Posterior cingulate gyrus (tissue), 11 donors: ENCODE measurements at regions of chr17 and their contacts with region 1.

Region 1: GRCh38 chr17:82551779-82552457 is 32.4 kb downstream of the FOXK2 start:
- DNase-seq: peak; percentile 26 to 94 (median 56)

Region 2: DNA sequence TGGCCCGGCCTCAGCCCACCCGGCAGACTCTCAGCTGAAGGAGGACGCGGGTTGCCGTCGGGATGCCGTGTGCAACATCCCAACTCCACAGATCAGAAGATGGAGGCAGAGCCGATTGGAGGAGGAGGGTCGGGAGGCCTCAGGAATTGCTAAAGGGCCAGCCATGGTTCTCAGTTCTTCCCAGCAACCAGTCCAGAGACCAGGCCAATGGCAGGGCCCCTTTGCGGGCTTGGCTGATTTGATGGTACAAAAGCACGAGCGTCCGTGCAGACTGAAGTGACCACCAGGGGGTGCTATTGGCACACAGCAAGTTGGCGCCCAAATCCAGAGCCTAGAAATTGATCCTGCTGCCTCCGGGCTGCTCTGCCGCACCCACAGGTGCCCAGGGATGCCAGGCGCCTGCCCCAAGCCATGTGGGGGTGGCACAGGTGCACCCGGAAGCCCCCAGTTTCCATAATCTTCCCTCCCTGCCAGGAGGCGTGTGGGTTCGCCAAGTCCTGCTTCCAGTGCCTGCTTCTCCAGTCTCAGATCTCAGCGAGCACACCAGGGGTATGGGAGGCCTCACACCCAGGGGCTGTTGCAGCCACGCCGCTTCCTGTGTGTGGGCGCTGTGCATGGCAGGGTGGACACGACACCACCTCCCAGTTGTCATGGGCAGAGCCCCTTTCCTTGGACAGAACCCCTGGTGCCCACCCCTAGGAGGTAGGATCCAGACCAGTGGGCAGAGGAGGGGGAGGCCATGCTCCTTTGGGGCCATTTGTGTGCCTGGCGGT is 200.0 kb before region 1 on chr17:
- intact Hi-C with region 1: loop called (anchors 10 kb)
- DNase-seq: peak; percentile 63 to 96 (median 86)

Region 3: DNA sequence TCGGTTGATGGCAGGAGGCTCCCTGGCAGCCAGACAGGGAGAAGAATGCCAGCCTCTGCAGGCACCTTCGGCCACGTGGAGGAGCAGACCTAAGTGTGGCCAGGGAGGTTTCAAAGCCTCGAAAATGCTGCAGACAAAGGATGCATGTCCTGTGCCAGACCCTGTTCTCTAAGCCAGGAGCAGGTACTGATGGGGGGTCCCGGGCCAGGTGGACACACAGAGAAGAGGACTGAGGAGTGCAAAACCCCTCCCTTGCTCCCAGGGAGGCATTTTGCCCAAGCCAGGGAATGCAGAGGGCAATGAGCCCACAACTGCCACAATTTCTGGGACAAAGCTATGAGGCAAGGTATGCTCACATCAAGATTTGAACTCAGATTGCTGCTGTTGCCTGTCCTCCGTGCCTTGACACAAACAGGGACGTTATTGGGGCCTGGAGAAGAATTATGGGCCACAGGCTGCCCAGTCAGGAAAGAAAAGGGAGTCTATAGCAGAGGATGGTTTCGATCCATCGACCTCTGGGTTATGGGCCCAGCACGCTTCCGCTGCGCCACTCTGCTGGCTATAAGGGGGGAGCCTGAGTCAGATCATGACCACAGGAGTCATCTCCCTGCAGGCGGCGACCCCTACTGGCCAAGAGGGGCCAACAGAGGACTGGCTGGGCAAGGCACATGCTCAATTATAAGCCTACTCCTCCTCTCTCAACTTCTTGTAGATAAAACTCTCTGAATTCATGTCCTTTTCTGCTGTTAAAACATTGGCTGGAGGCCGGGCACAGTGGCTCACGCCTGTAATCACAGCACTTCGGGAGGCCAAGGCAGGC is 57.5 kb before region 1 on chr17:
- intact Hi-C with region 1: loop called (anchors 10 kb)
- DNase-seq: peak; percentile 82 to 98 (median 89)

Region 4: DNA sequence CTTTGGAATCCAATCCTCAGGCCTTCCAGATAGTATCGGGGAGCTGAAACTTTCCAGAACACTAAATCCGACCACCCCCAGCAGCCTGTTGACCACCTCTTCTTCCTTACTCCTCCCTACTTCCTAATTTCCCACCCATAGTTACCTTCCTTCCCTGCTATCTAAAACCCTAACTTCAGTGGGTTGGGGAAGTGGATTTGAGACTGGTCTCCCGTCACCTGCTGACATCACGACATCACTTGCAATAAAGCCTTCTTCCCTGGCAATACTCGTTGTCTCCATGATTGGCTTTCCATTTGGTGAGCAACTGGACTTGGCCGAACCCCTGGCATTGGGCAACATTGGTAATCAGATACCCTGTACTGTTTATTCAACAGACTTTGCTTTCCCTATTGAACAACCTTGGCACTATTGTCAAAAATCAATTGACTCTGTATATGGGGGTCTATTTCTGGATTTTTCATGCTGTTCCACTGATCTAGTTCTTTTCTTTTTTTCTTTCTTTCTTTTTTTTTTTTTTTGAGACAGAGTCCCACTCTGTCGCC is 44.2 kb before region 1 on chr17:
- intact Hi-C with region 1: no loop called
- DNase-seq: no peak

Region 5: DNA sequence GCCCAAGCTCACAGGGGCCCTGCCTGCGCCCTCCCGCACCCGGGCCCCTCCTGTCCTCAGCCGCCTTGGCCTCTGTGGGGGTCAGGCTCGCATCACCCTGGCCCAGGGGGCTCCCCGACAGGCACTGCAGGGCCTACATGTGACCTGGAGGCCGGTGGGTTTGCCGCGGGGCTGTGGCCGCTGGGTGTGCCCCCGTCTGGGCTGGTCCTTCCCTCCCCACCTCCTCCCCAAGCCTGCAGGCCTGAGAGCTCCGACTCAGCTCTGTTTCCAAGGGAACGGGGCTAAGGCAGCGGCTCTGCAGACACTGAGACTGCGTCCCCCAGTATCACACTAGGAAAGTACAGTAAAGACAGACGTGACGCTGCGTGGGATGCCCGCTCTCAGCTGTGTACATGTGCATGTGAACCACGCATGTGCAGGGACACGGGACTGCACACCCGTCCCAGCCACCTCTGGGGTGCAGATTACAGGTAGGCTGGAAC is 112.8 kb after region 1 on chr17:
- intact Hi-C with region 1: no loop called
- DNase-seq: peak in 8 of 10 donors; percentile 46 to 96 (median 76)

Region 6: DNA sequence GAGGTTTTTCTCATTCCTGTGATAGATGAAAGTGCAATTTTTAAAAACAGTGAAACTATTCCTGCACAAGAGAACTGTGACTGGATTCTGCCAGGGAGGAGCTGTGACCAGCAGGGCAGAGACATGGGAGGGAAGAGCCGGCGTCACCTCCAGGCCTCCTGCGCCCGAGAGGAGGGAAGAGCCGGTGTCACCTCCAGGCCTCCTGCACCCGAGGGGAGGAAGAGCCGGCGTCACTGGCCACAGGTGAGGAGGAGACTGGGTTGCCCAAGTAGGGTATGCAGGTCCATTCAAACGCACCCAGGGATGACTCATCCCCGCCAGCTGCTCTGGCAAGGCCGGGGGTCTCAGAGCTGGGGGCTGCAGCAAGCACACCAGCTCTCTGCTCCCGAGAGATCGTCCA is 584.2 kb after region 1 on chr17:
- intact Hi-C with region 1: no loop called
- DNase-seq: peak in 2 of 10 donors; percentile 26 to 51